PC-3 (cell line): ENCODE measurements at regions of chr3 and their contacts with region 1.

Region 1: GRCh38 chr3:144763878-144764454 is 792.3 kb downstream of the DIPK2A start:
- DNase-seq: no peak
- ATAC-seq: no peak
- H3K4me3 ChIP-seq: no peak overlapping the region; the same call in 1 of the 2 replicates
- H3K27ac ChIP-seq: no peak overlapping the region
- H3K4me1 ChIP-seq: no peaks in the 10 kb centered on the region
- H3K27me3 ChIP-seq: no peaks in the 10 kb centered on the region
- CTCF ChIP-seq: no peak

Region 2: DNA sequence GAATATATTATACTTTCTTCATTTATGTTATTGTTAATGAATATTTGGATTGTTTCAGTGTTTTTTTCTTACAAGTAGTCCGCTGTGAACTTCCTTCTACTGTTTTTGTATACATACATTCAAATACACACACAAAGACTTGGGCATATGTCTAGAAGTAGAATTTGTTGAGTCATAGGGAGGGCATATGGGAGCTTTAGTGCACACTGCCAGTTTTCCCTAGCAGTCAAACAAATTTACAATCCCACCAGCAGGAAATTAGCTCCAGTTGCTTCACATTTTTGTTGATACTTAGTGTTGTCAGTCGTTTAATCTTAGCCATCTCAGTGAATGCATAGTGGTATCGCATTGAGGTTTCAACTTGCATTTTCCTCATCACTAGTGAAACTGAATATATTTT is 300.1 kb before region 1 on chr3:
- CTCF ChIA-PET with region 1: no interaction called
- POLR2A ChIA-PET with region 1: no interaction called
- intact Hi-C with region 1: no loop called
- DNase-seq: no peak
- ATAC-seq: no peak
- H3K4me3 ChIP-seq: no peak overlapping the region
- H3K27ac ChIP-seq: no peak overlapping the region
- H3K4me1 ChIP-seq: no peaks in the 10 kb centered on the region
- H3K27me3 ChIP-seq: no peaks in the 10 kb centered on the region
- CTCF ChIP-seq: no peak

Region 3: DNA sequence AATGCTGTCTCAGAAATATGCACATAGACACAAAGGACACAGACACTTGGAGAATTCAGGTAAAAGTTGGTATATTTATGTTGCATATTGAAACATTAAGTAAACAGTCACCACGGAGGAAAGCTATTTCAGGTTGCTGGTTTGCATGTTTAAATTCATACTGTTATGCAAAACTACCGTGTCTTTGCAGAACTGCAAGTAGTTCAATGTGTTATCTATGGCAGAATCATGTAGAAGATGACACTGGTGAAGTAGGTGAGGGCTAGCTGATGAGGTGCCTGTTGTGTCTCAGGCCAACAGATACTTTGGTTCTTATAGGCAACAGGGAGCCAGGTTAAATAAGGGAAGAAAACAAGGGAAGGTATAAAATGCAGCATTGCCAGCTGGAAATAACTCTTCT is 281.1 kb before region 1 on chr3:
- CTCF ChIA-PET with region 1: no interaction called
- POLR2A ChIA-PET with region 1: no interaction called
- intact Hi-C with region 1: loop called (anchors 10 kb)
- DNase-seq: no peak
- ATAC-seq: no peak
- H3K4me3 ChIP-seq: no peak overlapping the region
- H3K27ac ChIP-seq: no peak overlapping the region
- H3K4me1 ChIP-seq: no peaks in the 10 kb centered on the region
- H3K27me3 ChIP-seq: no peaks in the 10 kb centered on the region
- CTCF ChIP-seq: no peak

Region 4: GRCh38 chr3:145209561-145209960 is 445.6 kb after region 1 on chr3:
- CTCF ChIA-PET with region 1: no interaction called
- POLR2A ChIA-PET with region 1: no interaction called
- intact Hi-C with region 1: no loop called
- DNase-seq: no peak
- ATAC-seq: no peak
- H3K4me3 ChIP-seq: no peak overlapping the region
- H3K27ac ChIP-seq: no peak overlapping the region
- H3K4me1 ChIP-seq: no peaks in the 10 kb centered on the region
- H3K27me3 ChIP-seq: no peaks in the 10 kb centered on the region
- CTCF ChIP-seq: no peak